ENCODE measurements at regions of chr7 and their contacts with region 1.

Region 1: GRCh38 chr7:70975754-70976153 is 156.2 kb upstream of the GALNT17 start:
- DNase-seq: no peak
- ATAC-seq: no peak
- H3K4me3 ChIP-seq: no peak overlapping the region
- H3K27ac ChIP-seq: no peak overlapping the region
- H3K4me1 ChIP-seq: no peaks in the 10 kb centered on the region
- H3K27me3 ChIP-seq: no peaks in the 10 kb centered on the region
- CTCF ChIP-seq: no peak
- EP300 ChIP-seq: no peak
- POLR2A ChIP-seq: no peak
- RAD21 ChIP-seq: no peak

Region 2: GRCh38 chr7:70953331-70953741 is 22.4 kb before region 1 on chr7:
- CTCF ChIA-PET with region 1: no interaction called
- POLR2A ChIA-PET with region 1: interaction called, 6 read pairs
- in situ Hi-C with region 1: no loop called
- intact Hi-C with region 1: loop called (anchors 1 kb)
- DNase-seq: no peak
- ATAC-seq: no peak
- H3K4me3 ChIP-seq: no peak overlapping the region
- H3K27ac ChIP-seq: no peak overlapping the region
- H3K4me1 ChIP-seq: no peaks in the 10 kb centered on the region
- H3K27me3 ChIP-seq: no peaks in the 10 kb centered on the region
- CTCF ChIP-seq: no peak
- EP300 ChIP-seq: no peak
- POLR2A ChIP-seq: no peak
- RAD21 ChIP-seq: no peak

Region 3: DNA sequence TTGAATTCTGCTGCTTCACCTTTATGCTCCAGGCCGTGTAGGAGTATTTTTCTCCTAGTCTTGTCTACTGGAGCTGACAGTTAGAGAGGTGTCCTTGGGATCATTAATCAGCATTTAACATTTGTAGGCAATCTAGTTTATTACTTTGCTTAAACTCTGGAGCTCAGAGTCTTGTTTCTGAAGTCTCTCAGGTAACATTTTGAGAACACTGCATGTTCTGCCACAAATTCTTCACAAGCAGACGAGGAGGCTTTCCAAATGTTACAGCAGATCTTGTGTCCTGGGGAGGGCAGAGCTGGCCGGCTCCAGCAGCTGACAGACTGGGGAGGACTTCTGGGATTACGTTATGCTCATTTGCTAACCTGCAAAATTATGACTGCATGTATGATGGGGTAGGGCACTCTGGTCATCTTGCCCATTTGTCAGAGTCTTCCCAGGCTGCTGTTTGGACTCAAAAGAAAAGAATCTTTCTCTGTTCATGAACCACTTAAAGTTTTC is 206.7 kb after region 1 on chr7:
- CTCF ChIA-PET with region 1: no interaction called
- POLR2A ChIA-PET with region 1: no interaction called
- in situ Hi-C with region 1: no loop called
- intact Hi-C with region 1: no loop called
- DNase-seq: no peak
- ATAC-seq: no peak
- H3K4me3 ChIP-seq: no peak overlapping the region
- H3K27ac ChIP-seq: no peak overlapping the region
- H3K4me1 ChIP-seq: no peaks in the 10 kb centered on the region
- H3K27me3 ChIP-seq: peaks cover 0 to 3% of the 10 kb centered on the region in 2 experiments; a peak in 1 of 5 replicates
- CTCF ChIP-seq: no peak
- EP300 ChIP-seq: no peak
- POLR2A ChIP-seq: no peak
- RAD21 ChIP-seq: no peak

Measured in K562 (cell line).